GM18951 (cell line): ENCODE measurements at regions of chr3 and their contacts with region 1.

Region 1: GRCh38 chr3:36741285-36741684 is 23.1 kb downstream of the DCLK3 start:
- POLR2A ChIP-seq: no peak

Region 2: DNA sequence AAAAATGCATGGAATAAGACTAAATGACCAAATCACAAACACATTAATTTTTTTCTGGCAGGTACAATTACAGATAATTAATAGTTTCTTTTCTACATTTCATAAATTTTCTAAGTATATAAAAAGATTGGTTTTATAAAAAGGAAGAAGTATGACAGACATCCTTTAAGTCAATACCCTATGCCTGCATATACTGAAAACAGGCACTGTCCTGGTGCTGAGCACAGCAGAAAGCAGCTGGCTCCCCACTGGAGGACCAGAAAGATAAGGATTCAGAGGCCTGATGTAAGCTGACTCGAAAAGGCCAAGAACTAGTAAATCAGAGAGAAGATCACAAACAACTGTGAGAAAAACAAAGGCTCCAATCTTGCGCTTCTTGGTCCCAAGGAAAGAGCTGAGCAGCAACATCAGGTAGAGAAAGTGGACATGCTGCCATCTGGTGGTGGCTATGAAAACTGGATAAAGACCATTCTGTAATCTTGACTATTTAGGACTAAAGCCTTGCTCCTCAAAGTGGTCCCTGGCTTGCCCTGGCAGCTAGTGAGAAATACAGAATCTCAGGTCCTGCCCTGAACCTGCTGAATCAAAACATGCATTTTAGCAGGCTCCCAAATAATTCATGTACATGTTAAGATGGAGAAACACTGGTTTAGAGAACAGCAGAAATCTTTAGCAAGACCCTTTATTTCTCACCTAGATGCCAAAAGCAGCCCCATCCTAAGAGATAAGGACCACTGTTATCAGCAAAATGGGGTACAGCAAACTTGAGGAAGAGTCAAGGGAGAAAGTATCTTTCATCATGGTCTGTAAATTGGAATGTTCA is 127.5 kb after region 1 on chr3:
- in situ Hi-C with region 1: loop called (anchors 10 kb)
- POLR2A ChIP-seq: no peak